GM12878 (cell line): ENCODE measurements at regions of chr6 and their contacts with region 1.

Region 1: GRCh38 chr6:38493931-38494547 is 145.7 kb downstream of the BTBD9 start:
- DNase-seq: peak; percentile 52
- ATAC-seq: peak; percentile 69
- H3K4me3 ChIP-seq: no peak overlapping the region
- H3K27ac ChIP-seq: no peak overlapping the region
- H3K4me1 ChIP-seq: 0 out of 2 replicates have a peak, but pooled peaks cover 9% of the 10 kb centered on the region
- H3K27me3 ChIP-seq: no peaks in the 10 kb centered on the region
- CTCF ChIP-seq: peak; percentile 70 to 90 (median 74)
- EP300 ChIP-seq: no peak
- POLR2A ChIP-seq: no peak
- RAD21 ChIP-seq: peak; percentile 98

Region 2: GRCh38 chr6:37745748-37746147 is 748.3 kb before region 1 on chr6:
- CTCF ChIA-PET with region 1: no interaction called
- POLR2A ChIA-PET with region 1: no interaction called
- RAD21 ChIA-PET with region 1: no interaction called
- SMC1A ChIA-PET with region 1: no interaction called
- in situ Hi-C with region 1: no loop called
- intact Hi-C with region 1: no loop called
- DNase-seq: no peak
- ATAC-seq: no peak
- H3K4me3 ChIP-seq: no peak overlapping the region
- H3K27ac ChIP-seq: no peak overlapping the region
- H3K4me1 ChIP-seq: no peaks in the 10 kb centered on the region
- H3K27me3 ChIP-seq: peaks cover 2 to 5% of the 10 kb centered on the region in 2 experiments; a peak in 3 of 4 replicates
- CTCF ChIP-seq: no peak
- EP300 ChIP-seq: no peak
- POLR2A ChIP-seq: no peak
- RAD21 ChIP-seq: no peak

Region 3: GRCh38 chr6:37783856-37784584 is 710.0 kb before region 1 on chr6:
- CTCF ChIA-PET with region 1: interaction called, 4 read pairs
- POLR2A ChIA-PET with region 1: no interaction called
- RAD21 ChIA-PET with region 1: interaction called, 5 read pairs
- SMC1A ChIA-PET with region 1: interaction called, 3 read pairs
- in situ Hi-C with region 1: loop called (anchors 10 kb)
- intact Hi-C with region 1: no loop called
- DNase-seq: no peak
- ATAC-seq: peak; percentile 70
- H3K4me3 ChIP-seq: peak overlapping the region; percentile 58
- H3K27ac ChIP-seq: no peak overlapping the region
- H3K4me1 ChIP-seq: peaks cover 21% of the 10 kb centered on the region
- H3K27me3 ChIP-seq: no peaks in the 10 kb centered on the region; a peak in 1 of 4 replicates
- CTCF ChIP-seq: peak in 1 of 3 experiments; percentile 12; a peak in 1 of 6 replicates
- EP300 ChIP-seq: no peak
- POLR2A ChIP-seq: peak; percentile 66
- RAD21 ChIP-seq: no peak

Region 4: DNA sequence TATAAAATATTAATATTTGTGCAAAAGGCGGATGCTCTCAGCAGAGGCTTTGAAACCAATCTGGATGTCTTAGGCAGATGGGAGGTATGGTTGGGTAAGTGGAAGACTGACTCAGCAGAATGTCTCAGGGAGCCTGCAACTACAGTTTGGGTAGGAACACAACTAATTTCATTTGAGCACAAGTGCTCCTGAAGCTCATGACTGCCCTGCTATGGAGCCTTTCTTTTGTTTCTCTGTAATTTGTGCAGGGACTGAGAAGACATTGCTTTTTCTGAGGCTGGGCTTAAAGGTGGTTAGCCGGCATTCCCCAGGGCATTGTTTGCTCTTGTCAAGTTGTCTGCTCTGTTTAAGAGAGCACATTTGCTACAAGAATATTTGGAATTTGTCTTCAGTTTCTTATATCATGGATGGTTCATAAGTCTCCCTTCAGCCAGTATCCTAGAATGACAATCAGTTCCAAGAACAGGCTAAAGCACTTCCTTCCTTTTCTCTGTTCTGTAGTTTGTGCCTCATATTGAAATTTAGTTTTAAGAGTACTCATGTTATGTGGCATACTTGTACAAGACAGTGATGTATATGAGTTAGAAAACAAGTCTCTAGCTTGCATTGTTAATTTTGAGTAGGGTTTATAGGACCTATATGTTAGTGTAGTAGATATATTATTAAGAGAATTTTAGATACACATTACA is 466.2 kb before region 1 on chr6:
- CTCF ChIA-PET with region 1: interaction called, 63 read pairs
- POLR2A ChIA-PET with region 1: no interaction called
- RAD21 ChIA-PET with region 1: interaction called, 31 read pairs
- SMC1A ChIA-PET with region 1: interaction called, 28 read pairs
- in situ Hi-C with region 1: loop called (anchors 5 kb)
- intact Hi-C with region 1: no loop called
- DNase-seq: no peak
- ATAC-seq: peak; percentile 51
- H3K4me3 ChIP-seq: no peak overlapping the region
- H3K27ac ChIP-seq: peak overlapping the region; percentile 8; the same call in 1 of the 2 replicates
- H3K4me1 ChIP-seq: peaks cover 4% of the 10 kb centered on the region; the same call in 1 of the 2 replicates
- H3K27me3 ChIP-seq: no peaks in the 10 kb centered on the region
- CTCF ChIP-seq: no peak
- EP300 ChIP-seq: no peak
- POLR2A ChIP-seq: no peak
- RAD21 ChIP-seq: no peak

Region 5: GRCh38 chr6:38179300-38179699 is 314.7 kb before region 1 on chr6:
- CTCF ChIA-PET with region 1: interaction called, 4 read pairs
- POLR2A ChIA-PET with region 1: no interaction called
- RAD21 ChIA-PET with region 1: interaction called, 5 read pairs
- SMC1A ChIA-PET with region 1: no interaction called
- in situ Hi-C with region 1: no loop called
- intact Hi-C with region 1: loop called (anchors 10 kb)
- DNase-seq: no peak
- ATAC-seq: no peak; the same call in 2 of the 3 replicates
- H3K4me3 ChIP-seq: no peak overlapping the region
- H3K27ac ChIP-seq: no peak overlapping the region
- H3K4me1 ChIP-seq: no peaks in the 10 kb centered on the region
- H3K27me3 ChIP-seq: no peaks in the 10 kb centered on the region
- CTCF ChIP-seq: no peak
- EP300 ChIP-seq: no peak
- POLR2A ChIP-seq: no peak
- RAD21 ChIP-seq: no peak

Region 6: DNA sequence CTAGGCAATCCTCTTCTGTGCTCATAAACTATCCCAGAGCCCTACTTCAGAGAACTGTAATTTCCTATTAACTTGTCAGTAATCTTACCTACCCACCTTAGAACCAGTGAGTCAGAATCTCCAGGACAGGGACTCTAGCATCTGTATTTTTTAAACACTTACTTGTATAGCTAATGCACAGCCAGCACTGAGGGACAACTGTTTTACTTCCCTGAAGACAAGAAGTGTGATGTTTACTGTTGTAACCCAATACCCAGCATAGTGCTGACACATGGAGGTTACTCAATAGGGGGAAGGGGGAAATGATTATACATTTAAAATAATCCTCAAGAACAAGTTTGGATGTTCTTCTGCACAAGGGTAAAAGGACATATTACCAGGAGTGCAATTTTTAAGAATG is 14.9 kb after region 1 on chr6:
- CTCF ChIA-PET with region 1: interaction called, 17 read pairs
- POLR2A ChIA-PET with region 1: no interaction called
- RAD21 ChIA-PET with region 1: no interaction called
- SMC1A ChIA-PET with region 1: interaction called, 9 read pairs
- in situ Hi-C with region 1: no loop called
- intact Hi-C with region 1: no loop called
- DNase-seq: no peak
- ATAC-seq: no peak
- H3K4me3 ChIP-seq: no peak overlapping the region
- H3K27ac ChIP-seq: no peak overlapping the region
- H3K4me1 ChIP-seq: no peaks in the 10 kb centered on the region
- H3K27me3 ChIP-seq: no peaks in the 10 kb centered on the region
- CTCF ChIP-seq: no peak
- EP300 ChIP-seq: no peak
- POLR2A ChIP-seq: no peak
- RAD21 ChIP-seq: no peak

Region 7: GRCh38 chr6:38570750-38571149 is 76.7 kb after region 1 on chr6:
- CTCF ChIA-PET with region 1: interaction called, 67 read pairs
- POLR2A ChIA-PET with region 1: no interaction called
- RAD21 ChIA-PET with region 1: interaction called, 27 read pairs
- SMC1A ChIA-PET with region 1: interaction called, 36 read pairs
- in situ Hi-C with region 1: no loop called
- intact Hi-C with region 1: loop called (anchors 1 kb)
- DNase-seq: no peak
- ATAC-seq: peak; percentile 61
- H3K4me3 ChIP-seq: no peak overlapping the region
- H3K27ac ChIP-seq: no peak overlapping the region
- H3K4me1 ChIP-seq: no peaks in the 10 kb centered on the region
- H3K27me3 ChIP-seq: no peaks in the 10 kb centered on the region
- CTCF ChIP-seq: peak; percentile 12 to 53 (median 46); a peak in 2 of 6 replicates
- EP300 ChIP-seq: no peak
- POLR2A ChIP-seq: no peak
- RAD21 ChIP-seq: peak; percentile 63